ENCODE measurements at regions of chr11 and their contacts with region 1.

Region 1: DNA sequence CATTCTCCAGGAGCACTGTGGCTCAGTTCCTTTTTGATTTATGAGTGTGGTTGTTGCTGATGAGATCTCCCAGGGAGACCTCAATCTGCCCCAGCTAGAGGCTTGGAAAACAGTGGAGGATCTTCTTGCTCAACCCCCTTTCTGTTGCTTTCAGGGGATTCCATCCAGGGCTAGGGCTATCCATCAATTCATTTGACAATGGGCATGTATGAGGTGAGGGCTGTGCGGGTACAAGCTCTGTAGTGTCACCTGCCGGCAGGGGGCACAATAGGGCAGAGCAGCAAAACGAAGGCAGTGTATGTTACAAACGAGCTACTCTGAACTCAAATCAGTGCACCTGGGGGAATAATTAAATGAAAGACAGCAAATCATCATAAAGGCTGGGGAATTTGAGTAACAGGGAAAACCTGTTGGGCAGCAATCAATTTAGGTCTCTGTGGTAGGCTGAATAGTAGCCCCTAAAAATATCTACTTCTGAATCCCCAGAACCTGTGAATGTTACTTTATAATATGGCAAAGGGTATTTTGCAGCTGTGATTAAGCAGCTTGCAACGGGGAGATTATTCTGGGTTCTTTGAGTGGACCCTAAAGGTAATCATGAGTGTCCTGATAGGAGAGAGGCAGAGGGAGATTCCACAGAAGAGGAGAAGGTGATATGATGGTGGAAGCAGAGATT is 170.3 kb upstream of the ZBED5 start:
- DNase-seq: peak; percentile 88
- ATAC-seq: peak; percentile 91
- H3K4me3 Mint-ChIP-seq: no peak overlapping the region
- H3K27ac Mint-ChIP-seq: no peak overlapping the region
- H3K4me1 Mint-ChIP-seq: no peaks in the 10 kb centered on the region
- H3K27me3 Mint-ChIP-seq: no peaks in the 10 kb centered on the region

Region 2: GRCh38 chr11:10838083-10838482 is 190.1 kb before region 1 on chr11:
- CTCF ChIA-PET with region 1: no interaction called
- POLR2A ChIA-PET with region 1: no interaction called
- intact Hi-C with region 1: no loop called
- DNase-seq: no peak
- ATAC-seq: no peak
- H3K4me3 Mint-ChIP-seq: no peak overlapping the region
- H3K27ac Mint-ChIP-seq: no peak overlapping the region
- H3K4me1 Mint-ChIP-seq: no peaks in the 10 kb centered on the region
- H3K27me3 Mint-ChIP-seq: no peaks in the 10 kb centered on the region

Region 3: DNA sequence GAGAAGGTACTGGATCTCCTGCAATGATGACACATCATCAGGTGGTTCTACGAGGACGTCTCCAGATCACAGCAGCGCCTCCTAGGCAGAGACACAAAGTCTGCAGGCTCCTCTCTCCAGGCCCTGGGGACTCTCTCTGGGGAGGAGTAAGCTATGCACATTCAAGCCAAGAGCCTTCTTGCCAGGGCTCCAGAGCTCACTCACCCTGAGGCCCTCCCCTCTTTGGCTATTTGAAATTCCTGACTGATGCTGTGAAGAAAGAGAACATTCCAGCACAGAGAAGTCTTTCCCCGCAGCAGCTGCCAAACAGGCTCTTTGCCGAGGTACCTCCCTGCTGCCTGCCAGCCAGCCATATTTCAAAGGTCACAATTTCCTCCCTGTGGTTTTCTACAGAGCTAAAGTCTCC is 120.0 kb after region 1 on chr11:
- CTCF ChIA-PET with region 1: interaction called, 12 read pairs
- POLR2A ChIA-PET with region 1: no interaction called
- intact Hi-C with region 1: no loop called
- DNase-seq: peak; percentile 68
- ATAC-seq: peak; percentile 78
- H3K4me3 Mint-ChIP-seq: no peak overlapping the region
- H3K27ac Mint-ChIP-seq: peak overlapping the region; percentile 11
- H3K4me1 Mint-ChIP-seq: peaks cover 47% of the 10 kb centered on the region
- H3K27me3 Mint-ChIP-seq: no peaks in the 10 kb centered on the region

Region 4: DNA sequence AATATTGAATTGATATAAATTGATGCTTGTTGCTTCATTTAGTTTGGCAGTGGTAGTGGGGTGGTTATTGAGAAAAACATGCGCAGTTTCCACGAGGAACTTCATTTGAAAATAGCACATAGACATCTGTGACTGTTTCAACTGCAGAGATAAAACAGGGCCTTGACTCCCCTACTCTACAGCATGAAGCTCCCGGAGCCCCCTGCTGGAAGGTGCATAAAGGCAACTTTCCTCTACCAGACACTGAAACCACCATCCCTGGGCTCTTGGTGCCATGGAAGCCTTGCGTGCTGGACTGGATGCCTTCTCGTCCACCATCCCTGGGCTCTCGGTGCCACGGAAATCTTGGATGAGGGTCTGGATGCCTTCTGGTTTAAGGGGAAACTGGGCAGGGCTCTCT is 129.0 kb after region 1 on chr11:
- CTCF ChIA-PET with region 1: interaction called, 18 read pairs
- POLR2A ChIA-PET with region 1: no interaction called
- intact Hi-C with region 1: loop called in 1 of 2 experiments (anchors 2 kb)
- DNase-seq: peak; percentile 69
- ATAC-seq: peak; percentile 42
- H3K4me3 Mint-ChIP-seq: no peak overlapping the region
- H3K27ac Mint-ChIP-seq: peak overlapping the region; percentile 76
- H3K4me1 Mint-ChIP-seq: peaks cover 26% of the 10 kb centered on the region
- H3K27me3 Mint-ChIP-seq: no peaks in the 10 kb centered on the region

Region 5: DNA sequence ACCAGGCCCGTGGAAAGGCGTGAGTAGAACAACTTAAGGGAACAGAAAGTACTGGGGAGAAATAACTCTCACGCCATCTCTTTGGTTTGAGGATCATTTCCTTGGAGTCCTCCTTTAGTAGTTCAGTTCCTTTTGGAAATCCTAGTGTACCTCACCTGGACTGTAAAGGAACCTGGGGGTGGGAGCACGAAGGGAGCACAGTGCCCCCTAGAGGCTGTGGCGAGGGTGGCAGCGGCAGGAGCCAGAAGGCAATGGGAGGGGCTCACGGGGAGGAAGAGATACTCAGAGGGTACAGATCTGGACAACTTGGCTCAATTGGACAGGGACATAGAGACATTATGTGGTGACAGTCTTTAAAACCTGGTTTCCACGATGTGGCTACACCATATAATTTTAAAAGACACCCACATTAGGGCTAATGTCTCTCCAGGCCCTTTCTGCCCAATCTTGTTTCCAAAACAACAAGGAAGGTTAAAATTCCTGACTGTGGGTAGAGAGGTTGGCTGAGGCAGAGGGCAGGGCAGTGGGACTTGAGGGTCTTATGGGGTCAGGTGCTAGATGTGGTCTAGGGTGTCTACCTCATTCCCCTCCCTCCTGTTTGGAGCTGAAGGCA is 237.9 kb after region 1 on chr11:
- CTCF ChIA-PET with region 1: interaction called, 5 read pairs
- POLR2A ChIA-PET with region 1: no interaction called
- intact Hi-C with region 1: loop called (anchors 1 to 2 kb)
- DNase-seq: peak; percentile 83
- ATAC-seq: peak; percentile 68
- H3K4me3 Mint-ChIP-seq: no peak overlapping the region
- H3K27ac Mint-ChIP-seq: no peak overlapping the region
- H3K4me1 Mint-ChIP-seq: no peaks in the 10 kb centered on the region
- H3K27me3 Mint-ChIP-seq: peaks cover 2% of the 10 kb centered on the region

Region 6: DNA sequence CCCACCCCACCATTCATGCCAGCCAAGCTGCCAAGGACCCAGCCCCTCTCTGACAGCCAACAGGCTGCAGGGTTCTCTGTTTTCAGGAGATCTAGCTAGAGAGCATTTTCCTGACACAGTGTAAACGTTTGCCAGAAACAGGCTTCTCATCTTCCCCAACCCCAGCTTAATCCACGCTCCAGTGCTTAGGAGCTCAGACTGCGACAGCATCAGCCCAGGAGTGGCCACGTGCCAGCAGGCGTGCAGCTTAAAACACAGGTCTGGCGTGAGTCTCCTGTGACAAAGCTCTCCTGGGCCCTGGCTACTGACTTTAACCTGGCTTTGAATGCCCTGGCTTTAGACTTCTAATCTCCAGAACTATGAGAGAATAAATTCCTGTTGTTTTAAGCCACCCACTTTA is 527.1 kb after region 1 on chr11:
- CTCF ChIA-PET with region 1: no interaction called
- POLR2A ChIA-PET with region 1: no interaction called
- intact Hi-C with region 1: no loop called
- DNase-seq: no peak
- ATAC-seq: no peak
- H3K4me3 Mint-ChIP-seq: no peak overlapping the region
- H3K27ac Mint-ChIP-seq: no peak overlapping the region
- H3K4me1 Mint-ChIP-seq: no peaks in the 10 kb centered on the region
- H3K27me3 Mint-ChIP-seq: peaks cover 8% of the 10 kb centered on the region

Measured in activated CD4-positive, alpha-beta T cell treated with anti-CD3 and anti-CD28 coated beads for 36 hours (primary cell).